PC-3 (cell line): ENCODE measurements at regions of chr2 and their contacts with region 1.

Region 1: GRCh38 chr2:153871231-153872221 is at the start of gene GALNT13:
- DNase-seq: peak; percentile 45
- ATAC-seq: peak; percentile 87
- H3K4me3 ChIP-seq: peak within 1 kb of the TSS; percentile 57
- H3K27ac ChIP-seq: no peak within 1 kb of the TSS
- H3K4me1 ChIP-seq: no peaks in the 10 kb centered on the region
- H3K27me3 ChIP-seq: peaks cover 11% of the 10 kb centered on the region; the same call in 1 of the 2 replicates
- CTCF ChIP-seq: no peak
- total RNA-seq, gene GALNT13: 2.0 and 2.6 TPM in 2 replicates

Region 2: GRCh38 chr2:154078926-154079325 is 207.4 kb after region 1 on chr2:
- CTCF ChIA-PET with region 1: no interaction called
- POLR2A ChIA-PET with region 1: no interaction called
- intact Hi-C with region 1: loop called (anchors 5 kb)
- DNase-seq: no peak
- ATAC-seq: no peak
- H3K4me3 ChIP-seq: no peak overlapping the region
- H3K27ac ChIP-seq: no peak overlapping the region
- H3K4me1 ChIP-seq: no peaks in the 10 kb centered on the region
- H3K27me3 ChIP-seq: no peaks in the 10 kb centered on the region
- CTCF ChIP-seq: no peak

Region 3: GRCh38 chr2:154195644-154196195 is 324.2 kb after region 1 on chr2:
- CTCF ChIA-PET with region 1: no interaction called
- POLR2A ChIA-PET with region 1: no interaction called
- intact Hi-C with region 1: loop called (anchors 5 kb)
- DNase-seq: peak; percentile 12
- ATAC-seq: peak; percentile 57
- H3K4me3 ChIP-seq: no peak overlapping the region
- H3K27ac ChIP-seq: peak overlapping the region; percentile 52
- H3K4me1 ChIP-seq: no peaks in the 10 kb centered on the region
- H3K27me3 ChIP-seq: no peaks in the 10 kb centered on the region
- CTCF ChIP-seq: no peak

Region 4: GRCh38 chr2:154375579-154375931 is 504.0 kb after region 1 on chr2:
- CTCF ChIA-PET with region 1: no interaction called
- POLR2A ChIA-PET with region 1: no interaction called
- intact Hi-C with region 1: loop called (anchors 2 kb)
- DNase-seq: peak; percentile 64
- ATAC-seq: peak; percentile 65
- H3K4me3 ChIP-seq: peak overlapping the region; percentile 49; the same call in 1 of the 2 replicates
- H3K27ac ChIP-seq: no peak overlapping the region
- H3K4me1 ChIP-seq: no peaks in the 10 kb centered on the region
- H3K27me3 ChIP-seq: 0 out of 2 replicates have a peak, but pooled peaks cover 4% of the 10 kb centered on the region
- CTCF ChIP-seq: peak; percentile 60